Panc1 (cell line): ENCODE measurements at regions of chr2 and their contacts with region 1.

Region 1: DNA sequence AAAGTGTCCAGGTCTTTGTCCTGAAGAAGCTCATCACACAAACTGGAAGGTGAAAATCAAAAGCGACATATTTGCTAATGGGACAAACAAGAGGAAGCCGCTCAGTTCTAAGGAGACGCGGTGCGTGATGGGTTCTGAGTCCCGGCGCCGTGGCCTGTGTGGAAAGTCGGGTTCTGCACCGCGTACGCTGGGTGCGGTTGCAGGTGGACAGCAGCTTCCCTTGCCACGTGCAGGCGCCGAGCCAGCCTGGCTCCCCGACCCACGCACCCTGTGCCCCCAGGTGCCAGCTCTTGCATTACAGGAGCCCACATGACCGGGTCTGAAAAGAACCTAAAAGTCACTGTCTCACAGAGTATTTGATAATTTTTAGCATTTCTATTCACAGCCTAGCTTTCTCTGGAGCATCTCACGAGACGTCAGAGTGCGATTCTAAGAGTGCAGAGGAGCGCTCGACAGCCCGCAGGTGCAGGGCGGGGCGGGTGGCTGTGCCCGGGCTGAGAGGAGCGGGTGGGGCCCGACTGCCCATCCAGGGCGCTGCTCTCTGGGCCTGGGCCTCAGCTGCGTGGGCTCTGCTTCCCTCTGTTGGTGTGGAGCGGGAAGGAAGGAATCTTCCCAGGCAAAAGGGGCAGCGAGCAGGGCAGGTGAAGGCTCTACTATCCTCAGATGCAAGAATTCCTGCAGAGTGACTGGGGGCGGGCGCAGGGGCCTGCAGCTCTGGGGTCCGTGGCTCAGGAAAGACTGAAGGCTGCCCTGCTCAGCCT is 39.4 kb downstream of the MYT1L start:
- DNase-seq: no peak
- ATAC-seq: peak; percentile 87
- H3K4me3 ChIP-seq: no peak overlapping the region
- H3K27ac ChIP-seq: no peak overlapping the region
- H3K4me1 ChIP-seq: no peaks in the 10 kb centered on the region
- H3K27me3 ChIP-seq: peaks cover 3% of the 10 kb centered on the region; the same call in 1 of the 2 replicates
- CTCF ChIP-seq: peak; percentile 73

Region 2: GRCh38 chr2:1886405-1886992 is 405.2 kb before region 1 on chr2:
- CTCF ChIA-PET with region 1: interaction called, 3 read pairs
- POLR2A ChIA-PET with region 1: no interaction called
- in situ Hi-C with region 1: no loop called
- intact Hi-C with region 1: loop called (anchors 2 kb)
- DNase-seq: peak; percentile 20
- ATAC-seq: peak; percentile 87
- H3K4me3 ChIP-seq: no peak overlapping the region
- H3K27ac ChIP-seq: no peak overlapping the region
- H3K4me1 ChIP-seq: peaks cover 2% of the 10 kb centered on the region; the same call in 1 of the 2 replicates
- H3K27me3 ChIP-seq: peaks cover 12% of the 10 kb centered on the region
- CTCF ChIP-seq: peak; percentile 94

Region 3: DNA sequence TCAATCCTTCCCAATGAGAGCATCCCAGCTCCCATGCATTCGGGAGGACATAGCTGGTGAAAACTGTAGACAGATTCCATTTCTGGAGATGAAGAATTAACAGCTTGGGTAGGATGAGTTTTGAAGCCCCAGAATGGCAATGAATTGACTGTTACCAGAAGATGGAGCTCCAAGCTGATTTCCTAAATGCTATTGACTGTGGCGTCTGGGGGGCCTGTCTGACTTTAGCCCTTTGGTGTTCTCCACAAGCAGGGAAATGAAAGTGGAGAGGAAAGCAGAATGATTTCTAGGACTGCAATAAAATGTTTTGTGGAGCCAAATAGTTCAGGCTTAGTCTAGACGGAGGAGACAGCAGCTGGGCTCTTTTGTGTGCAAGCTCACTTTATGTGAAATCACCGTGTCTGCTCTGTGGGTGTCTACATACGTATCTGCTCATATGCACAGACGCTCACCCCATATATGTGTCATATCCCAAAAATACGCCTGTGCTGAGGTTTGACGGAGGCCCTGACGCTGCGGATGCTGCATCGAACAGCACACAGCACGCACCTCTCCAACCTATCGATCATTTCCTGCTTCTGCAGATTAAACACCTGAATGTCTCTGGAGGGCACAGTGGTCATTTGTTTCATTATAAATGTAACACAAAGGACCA is 381.0 kb before region 1 on chr2:
- CTCF ChIA-PET with region 1: no interaction called
- POLR2A ChIA-PET with region 1: no interaction called
- in situ Hi-C with region 1: no loop called
- intact Hi-C with region 1: no loop called
- DNase-seq: no peak
- ATAC-seq: 0 out of 2 replicates have a peak, but pooled peaks have one; percentile 31
- H3K4me3 ChIP-seq: no peak overlapping the region
- H3K27ac ChIP-seq: no peak overlapping the region
- H3K4me1 ChIP-seq: no peaks in the 10 kb centered on the region
- H3K27me3 ChIP-seq: peaks cover 2% of the 10 kb centered on the region; the same call in 1 of the 2 replicates
- CTCF ChIP-seq: peak; percentile 61

Region 4: GRCh38 chr2:2121887-2122286 is 169.8 kb before region 1 on chr2:
- CTCF ChIA-PET with region 1: no interaction called
- POLR2A ChIA-PET with region 1: no interaction called
- in situ Hi-C with region 1: no loop called
- intact Hi-C with region 1: loop called (anchors 2 kb)
- DNase-seq: no peak
- ATAC-seq: no peak
- H3K4me3 ChIP-seq: no peak overlapping the region
- H3K27ac ChIP-seq: no peak overlapping the region
- H3K4me1 ChIP-seq: no peaks in the 10 kb centered on the region
- H3K27me3 ChIP-seq: peaks cover 4% of the 10 kb centered on the region; the same call in 1 of the 2 replicates
- CTCF ChIP-seq: no peak

Region 5: DNA sequence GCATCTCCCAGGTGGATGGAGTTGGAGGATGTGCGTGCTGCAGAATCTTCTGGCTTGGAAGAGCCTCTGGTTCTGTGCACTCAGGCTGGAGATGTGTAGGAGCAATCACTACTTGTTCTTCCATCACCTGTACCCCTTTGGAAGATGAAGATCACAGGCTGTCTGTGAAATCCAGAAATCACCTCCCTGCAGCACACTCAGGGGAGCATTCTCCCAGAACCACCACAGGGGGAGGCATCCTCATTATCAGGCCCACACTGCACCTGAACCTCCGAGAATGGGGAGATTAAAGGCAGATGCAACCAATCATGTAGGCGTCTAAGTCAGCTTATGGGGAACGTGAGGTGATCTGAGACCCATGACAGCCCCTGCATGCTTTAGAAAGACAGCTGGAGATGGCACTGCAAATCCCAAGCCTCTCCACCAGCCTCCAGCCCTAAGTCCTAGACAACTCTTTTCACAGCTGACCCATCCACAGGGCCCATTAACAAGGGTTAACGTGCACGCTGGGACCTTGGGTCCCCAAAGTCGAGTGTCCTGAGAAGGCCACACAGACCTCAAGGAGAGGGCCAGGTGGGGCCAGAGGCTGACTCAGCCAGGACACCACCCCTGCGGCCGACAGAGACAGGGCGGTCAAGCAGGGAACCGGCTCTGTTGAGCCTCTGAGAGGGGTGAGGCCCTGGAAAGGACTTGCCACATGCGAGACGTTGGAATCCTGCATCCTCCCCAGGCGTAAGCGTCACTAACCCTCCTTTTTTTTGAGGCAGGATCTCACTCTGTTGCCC is 771.0 kb after region 1 on chr2:
- CTCF ChIA-PET with region 1: no interaction called
- POLR2A ChIA-PET with region 1: no interaction called
- in situ Hi-C with region 1: no loop called
- intact Hi-C with region 1: no loop called
- DNase-seq: no peak
- ATAC-seq: no peak
- H3K4me3 ChIP-seq: no peak overlapping the region
- H3K27ac ChIP-seq: no peak overlapping the region
- H3K4me1 ChIP-seq: no peaks in the 10 kb centered on the region
- H3K27me3 ChIP-seq: peaks cover 13% of the 10 kb centered on the region
- CTCF ChIP-seq: no peak